Activated CD4-positive, alpha-beta T cell treated with anti-CD3 and anti-CD28 coated beads for 36 hours (primary cell): ENCODE measurements at regions of chr12 and their contacts with region 1.

Region 1: GRCh38 chr12:75933101-75933500 is 98.5 kb downstream of the PHLDA1 start:
- DNase-seq: no peak
- ATAC-seq: no peak
- H3K4me3 Mint-ChIP-seq: no peak overlapping the region
- H3K27ac Mint-ChIP-seq: peak overlapping the region; percentile 3
- H3K4me1 Mint-ChIP-seq: peaks cover 26% of the 10 kb centered on the region
- H3K27me3 Mint-ChIP-seq: peaks cover 17% of the 10 kb centered on the region

Region 2: DNA sequence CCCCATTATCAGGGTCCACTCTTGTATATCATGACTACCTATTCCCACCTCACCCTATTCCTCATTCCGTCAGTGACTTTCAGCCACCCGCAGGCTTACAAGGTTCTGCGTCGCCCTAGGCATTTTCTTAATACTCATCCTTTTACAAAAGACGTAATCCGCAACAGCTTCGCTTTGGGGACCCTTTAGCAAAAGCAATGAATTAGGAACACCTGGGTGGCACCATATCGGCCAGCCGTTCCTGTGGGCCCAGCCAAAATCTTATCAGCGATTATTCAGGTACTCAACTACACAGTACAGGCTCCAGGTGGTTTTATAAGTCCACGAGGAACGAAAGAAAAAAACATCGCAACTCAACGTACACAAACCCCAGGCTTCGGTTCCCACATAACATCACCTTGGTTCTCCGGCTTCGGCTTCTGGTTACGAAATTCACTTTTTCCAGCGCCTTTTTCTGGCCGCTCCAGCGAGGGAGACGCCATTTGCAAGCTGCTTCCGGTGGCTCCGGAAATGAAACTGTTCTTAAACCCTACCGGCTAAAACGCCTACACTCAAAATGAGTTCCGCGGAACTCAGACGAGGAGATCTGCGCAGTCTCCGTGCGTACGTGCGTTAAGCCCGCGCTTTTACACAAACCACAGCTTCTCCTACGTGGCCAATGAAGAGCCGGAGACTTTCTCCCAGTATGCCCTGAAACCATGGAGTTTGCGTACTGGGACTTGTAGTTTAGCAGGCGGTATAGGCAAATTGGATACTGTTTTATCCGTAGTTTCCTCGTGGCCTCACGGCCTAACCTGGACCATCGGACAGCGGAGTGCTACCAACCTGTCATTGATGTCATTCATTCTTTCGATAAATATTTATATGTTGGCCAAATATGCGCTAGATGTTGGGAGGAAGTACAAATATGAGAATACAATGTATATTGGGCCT is 421.7 kb before region 1 on chr12 and contains the start of gene KRR1:
- CTCF ChIA-PET with region 1: no interaction called
- POLR2A ChIA-PET with region 1: interaction called, 6 read pairs
- intact Hi-C with region 1: loop called in 1 of 2 experiments (anchors 1 kb)
- DNase-seq: peak; percentile 94
- ATAC-seq: peak; percentile 96
- H3K4me3 Mint-ChIP-seq: peak within 1 kb of the TSS; percentile 100
- H3K27ac Mint-ChIP-seq: peak within 1 kb of the TSS; percentile 99
- H3K4me1 Mint-ChIP-seq: peaks cover 33% of the 10 kb centered on the region
- H3K27me3 Mint-ChIP-seq: no peaks in the 10 kb centered on the region
- total RNA-seq, gene KRR1: 122 to 147 TPM

Region 3: GRCh38 chr12:75892731-75893408 is 40.2 kb before region 1 on chr12:
- CTCF ChIA-PET with region 1: no interaction called
- POLR2A ChIA-PET with region 1: no interaction called
- intact Hi-C with region 1: no loop called
- DNase-seq: no peak
- ATAC-seq: no peak
- H3K4me3 Mint-ChIP-seq: no peak overlapping the region
- H3K27ac Mint-ChIP-seq: no peak overlapping the region
- H3K4me1 Mint-ChIP-seq: no peaks in the 10 kb centered on the region
- H3K27me3 Mint-ChIP-seq: peaks cover 28% of the 10 kb centered on the region

Region 4: DNA sequence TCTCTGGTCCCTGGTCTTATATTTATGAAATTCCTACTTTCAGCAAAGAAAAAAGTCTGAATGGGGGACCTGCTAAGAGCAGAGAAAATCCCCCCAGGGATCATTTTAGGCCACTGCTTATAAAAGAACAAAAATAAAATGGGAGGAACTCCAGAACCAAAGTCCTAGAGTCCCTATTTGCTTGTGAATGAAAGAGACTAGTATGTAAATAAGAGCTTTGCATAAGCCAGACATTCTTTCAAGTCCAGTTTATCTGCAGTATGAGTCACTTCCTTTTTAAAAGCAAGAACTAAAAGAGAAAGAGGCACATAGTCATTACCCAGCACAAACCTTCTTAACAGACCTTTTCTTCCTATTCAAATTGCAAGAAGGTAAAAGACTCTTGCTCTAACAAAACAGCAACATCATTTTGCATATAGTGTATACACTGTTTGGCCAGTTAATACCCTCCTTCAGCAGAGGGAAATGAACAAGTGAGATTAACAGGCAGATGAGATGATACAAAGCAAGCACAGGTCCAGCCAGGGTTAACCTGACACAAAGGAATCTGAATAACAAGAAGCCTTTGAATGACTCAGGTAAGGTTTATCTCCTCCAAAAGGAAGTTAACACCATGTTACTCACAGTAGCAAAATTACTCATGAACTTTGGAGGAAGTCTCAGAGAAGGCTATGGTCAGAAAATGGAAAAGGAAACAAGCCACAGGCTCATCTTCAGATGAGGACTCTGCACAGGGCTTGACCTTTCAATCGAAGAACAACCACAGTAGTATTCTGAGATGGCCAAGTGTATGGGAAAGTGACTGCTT is 11.2 kb after region 1 on chr12:
- CTCF ChIA-PET with region 1: interaction called, 5 read pairs
- POLR2A ChIA-PET with region 1: interaction called, 6 read pairs
- intact Hi-C with region 1: loop called (anchors 1 kb)
- DNase-seq: peak; percentile 42
- ATAC-seq: peak; percentile 92
- H3K4me3 Mint-ChIP-seq: peak overlapping the region; percentile 37
- H3K27ac Mint-ChIP-seq: peak overlapping the region; percentile 90
- H3K4me1 Mint-ChIP-seq: peaks cover 31% of the 10 kb centered on the region
- H3K27me3 Mint-ChIP-seq: no peaks in the 10 kb centered on the region

Region 5: DNA sequence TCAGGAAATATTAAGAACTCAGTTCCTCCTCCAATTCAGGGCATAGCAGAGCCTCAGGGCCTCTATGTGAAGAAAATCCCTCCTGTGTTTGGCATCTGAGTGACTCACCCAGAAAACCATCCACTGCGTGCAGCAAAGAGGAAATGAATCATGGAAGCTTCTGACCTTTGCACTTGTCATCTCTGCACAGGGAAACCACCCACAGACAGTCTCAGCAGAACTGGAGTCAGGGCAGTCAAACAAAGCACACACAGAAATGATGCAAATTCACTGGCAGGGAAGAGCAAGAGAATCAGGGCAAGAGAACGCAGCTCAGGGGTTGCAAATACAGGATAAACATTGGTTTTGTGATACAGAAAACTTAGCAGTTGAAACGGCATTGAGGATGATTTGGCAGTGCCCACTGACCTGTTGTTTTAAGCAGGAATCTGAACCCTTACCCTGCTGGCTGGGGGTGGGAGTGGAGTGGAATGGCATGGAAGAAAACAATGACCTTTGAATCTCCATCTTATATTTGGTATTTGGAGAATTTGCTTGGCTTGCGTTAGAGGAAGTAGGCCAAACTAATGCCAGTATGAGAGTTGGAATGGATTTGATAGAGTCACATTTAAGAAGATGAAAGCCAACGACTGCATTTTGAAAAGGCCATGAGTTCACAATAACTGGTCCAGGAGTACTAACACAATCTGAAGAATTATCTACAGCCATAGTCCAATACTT is 45.0 kb after region 1 on chr12:
- CTCF ChIA-PET with region 1: interaction called, 4 read pairs
- POLR2A ChIA-PET with region 1: interaction called, 8 read pairs
- intact Hi-C with region 1: loop called (anchors 1 kb)
- DNase-seq: peak; percentile 85
- ATAC-seq: peak; percentile 80
- H3K4me3 Mint-ChIP-seq: peak overlapping the region; percentile 59
- H3K27ac Mint-ChIP-seq: peak overlapping the region; percentile 100
- H3K4me1 Mint-ChIP-seq: peaks cover 69% of the 10 kb centered on the region
- H3K27me3 Mint-ChIP-seq: no peaks in the 10 kb centered on the region

Region 6: DNA sequence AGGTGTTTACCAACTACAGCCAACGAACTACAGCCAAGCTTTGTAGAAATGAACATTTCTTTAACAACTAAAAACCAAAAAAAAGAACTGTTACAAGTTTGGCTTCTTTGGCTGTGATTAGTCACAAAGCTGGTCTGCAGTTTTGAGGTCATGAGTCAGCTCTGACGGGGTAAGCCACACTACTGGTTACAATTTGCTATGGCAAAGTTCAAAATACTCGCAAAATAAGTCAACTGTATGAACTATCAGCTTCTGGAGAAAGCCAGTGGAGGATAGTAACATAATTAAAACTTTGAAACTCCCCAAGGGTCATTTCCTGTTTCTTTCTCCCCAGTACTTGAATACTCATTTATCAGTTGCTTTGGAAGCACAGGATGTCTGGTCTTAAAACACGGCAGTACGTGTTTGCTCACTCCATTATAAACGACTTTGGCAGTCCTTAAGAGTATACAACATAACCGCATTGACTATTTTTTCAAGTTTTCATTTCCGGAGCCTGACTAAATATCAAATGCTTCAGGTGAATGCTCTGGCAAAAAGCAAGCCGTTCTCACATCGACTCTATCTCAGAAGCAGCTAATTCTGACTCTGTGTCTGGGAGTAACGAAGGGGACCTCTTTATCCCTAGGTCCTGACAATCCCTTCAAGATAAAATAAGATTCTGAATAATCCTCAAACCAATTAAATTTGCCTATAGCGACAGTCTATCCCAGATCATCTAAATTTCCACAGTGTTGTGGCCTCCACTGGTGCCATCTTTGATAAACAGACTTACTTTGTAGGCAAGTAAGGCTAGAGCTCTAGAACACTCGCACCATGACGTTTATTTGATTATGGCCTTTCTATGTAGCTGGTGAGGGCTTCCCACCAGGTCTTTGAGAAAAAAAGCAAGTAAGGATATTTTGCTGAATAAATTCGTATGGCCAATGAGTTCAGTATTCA is 87.9 kb after region 1 on chr12:
- CTCF ChIA-PET with region 1: interaction called, 5 read pairs
- POLR2A ChIA-PET with region 1: interaction called, 3 read pairs
- intact Hi-C with region 1: loop called (anchors 1 kb)
- DNase-seq: peak; percentile 88
- ATAC-seq: peak; percentile 79
- H3K4me3 Mint-ChIP-seq: peak overlapping the region; percentile 54
- H3K27ac Mint-ChIP-seq: peak overlapping the region; percentile 99
- H3K4me1 Mint-ChIP-seq: peaks cover 56% of the 10 kb centered on the region
- H3K27me3 Mint-ChIP-seq: peaks cover 1% of the 10 kb centered on the region